ENCODE measurements at regions of chr7 and their contacts with region 1.

Region 1: DNA sequence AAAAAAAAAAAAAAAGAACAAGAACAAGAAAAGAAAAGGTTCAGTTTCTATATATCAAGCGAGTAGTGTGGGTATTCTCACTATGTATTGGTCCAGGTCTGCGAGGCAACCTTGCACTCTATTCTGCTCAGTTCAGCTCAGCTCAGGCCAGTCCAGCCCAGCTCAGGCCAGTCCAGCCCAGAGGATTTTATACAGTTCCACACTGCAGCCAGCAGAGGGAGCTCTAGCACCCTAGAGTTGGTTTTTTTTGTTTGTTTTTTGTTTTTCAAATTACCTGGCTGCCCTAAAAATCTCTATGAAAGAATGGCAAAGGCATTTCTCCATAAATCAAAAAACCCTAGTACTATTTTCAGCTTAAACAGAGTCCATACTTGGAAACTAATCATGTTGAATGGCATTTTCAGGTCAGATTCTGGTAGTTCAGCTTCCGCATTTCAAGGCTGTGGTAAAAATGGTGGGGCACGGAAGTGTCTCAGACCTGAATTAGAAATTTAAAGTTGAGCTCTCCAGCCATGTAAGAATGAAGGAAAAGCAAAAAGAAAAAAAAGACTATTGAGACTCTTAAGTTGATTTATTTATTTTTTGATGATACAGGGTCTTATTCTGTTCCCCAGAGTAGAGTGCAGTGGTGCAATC is 55.2 kb upstream of the GSDME start:
- DNase-seq: peak; percentile 52
- ATAC-seq: peak; percentile 75
- H3K4me3 Mint-ChIP-seq: no peak overlapping the region
- H3K27ac Mint-ChIP-seq: no peak overlapping the region
- H3K4me1 Mint-ChIP-seq: no peaks in the 10 kb centered on the region
- H3K27me3 Mint-ChIP-seq: no peaks in the 10 kb centered on the region
- CTCF ChIP-seq: peak; percentile 99

Region 2: GRCh38 chr7:24825931-24826661 is 13.7 kb after region 1 on chr7:
- CTCF ChIA-PET with region 1: interaction called, 20 read pairs
- POLR2A ChIA-PET with region 1: no interaction called
- intact Hi-C with region 1: no loop called
- DNase-seq: peak; percentile 13
- ATAC-seq: peak; percentile 17
- H3K4me3 Mint-ChIP-seq: no peak overlapping the region
- H3K27ac Mint-ChIP-seq: peak overlapping the region; percentile 68
- H3K4me1 Mint-ChIP-seq: peaks cover 64% of the 10 kb centered on the region
- H3K27me3 Mint-ChIP-seq: no peaks in the 10 kb centered on the region
- CTCF ChIP-seq: no peak

Region 3: DNA sequence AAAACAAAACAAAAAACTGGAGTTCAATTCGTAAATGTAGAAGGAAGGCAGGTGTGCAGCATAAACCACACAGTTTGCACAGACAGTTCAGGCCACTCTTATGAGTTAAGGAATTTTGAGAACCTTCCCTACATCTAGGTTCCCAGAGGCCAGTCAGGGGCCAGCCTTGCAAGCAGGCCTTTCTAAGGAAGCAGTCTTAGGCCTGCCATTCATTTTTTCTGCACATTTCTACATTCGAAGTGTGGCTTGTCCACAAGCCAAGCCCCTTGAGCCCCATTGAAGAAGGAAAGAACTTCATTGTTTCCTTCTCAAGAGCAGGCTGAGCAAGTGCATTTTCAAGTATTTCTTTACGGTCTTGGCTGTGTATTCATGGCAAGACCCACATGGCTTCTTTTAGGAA is 178.9 kb after region 1 on chr7:
- CTCF ChIA-PET with region 1: interaction called, 10 read pairs
- POLR2A ChIA-PET with region 1: no interaction called
- intact Hi-C with region 1: no loop called
- DNase-seq: no peak
- ATAC-seq: no peak
- H3K4me3 Mint-ChIP-seq: no peak overlapping the region
- H3K27ac Mint-ChIP-seq: no peak overlapping the region
- H3K4me1 Mint-ChIP-seq: no peaks in the 10 kb centered on the region
- H3K27me3 Mint-ChIP-seq: no peaks in the 10 kb centered on the region
- CTCF ChIP-seq: no peak

Region 4: GRCh38 chr7:25069900-25070443 is 257.5 kb after region 1 on chr7:
- CTCF ChIA-PET with region 1: interaction called, 66 read pairs
- POLR2A ChIA-PET with region 1: no interaction called
- intact Hi-C with region 1: no loop called
- DNase-seq: peak; percentile 54
- ATAC-seq: peak; percentile 71
- H3K4me3 Mint-ChIP-seq: no peak overlapping the region
- H3K27ac Mint-ChIP-seq: no peak overlapping the region
- H3K4me1 Mint-ChIP-seq: peaks cover 9% of the 10 kb centered on the region
- H3K27me3 Mint-ChIP-seq: peaks cover 2% of the 10 kb centered on the region
- CTCF ChIP-seq: peak; percentile 96

Region 5: DNA sequence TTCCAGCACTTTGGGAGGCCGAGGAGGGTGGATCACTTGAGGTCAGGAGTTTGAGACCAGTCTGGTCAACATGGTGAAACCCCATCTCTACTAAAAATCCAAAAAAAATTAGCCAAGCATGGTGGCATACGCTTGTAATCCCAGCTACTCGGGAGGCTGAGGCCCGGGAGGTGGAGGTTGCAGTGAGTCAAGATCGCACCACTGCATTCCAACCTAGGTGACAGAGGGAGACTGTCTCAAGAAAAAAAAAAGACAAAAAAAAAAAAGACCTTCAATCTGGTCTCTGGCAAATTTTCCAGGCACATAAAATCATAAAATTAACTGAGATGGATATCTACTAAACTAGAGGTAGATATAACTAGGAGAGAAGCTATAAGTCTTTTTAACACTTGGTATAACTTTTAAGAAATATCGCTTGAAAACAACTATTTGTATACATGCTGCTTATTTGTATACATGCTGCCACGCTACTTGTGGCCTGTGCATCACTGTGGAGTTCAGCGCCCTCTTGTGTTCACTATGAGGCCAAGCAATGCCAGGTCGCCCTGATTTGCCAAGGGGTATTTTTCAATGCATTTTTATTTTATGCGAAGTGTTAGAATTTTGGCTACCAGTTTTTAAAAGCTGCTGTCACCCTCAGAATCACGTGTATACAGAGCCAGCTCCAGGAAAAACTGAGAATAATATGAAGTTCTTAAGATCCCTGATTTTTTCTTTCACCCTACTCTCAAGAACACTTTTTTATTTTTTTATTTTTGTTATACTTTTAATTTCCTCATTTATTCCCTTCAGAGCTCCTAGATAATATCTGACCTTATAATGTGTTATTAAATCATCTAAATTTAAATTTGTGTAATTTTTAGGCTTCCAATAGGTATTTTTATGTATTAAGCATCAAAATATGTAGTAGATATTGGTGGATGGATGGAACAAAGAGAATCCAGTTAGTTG is 285.9 kb after region 1 on chr7:
- CTCF ChIA-PET with region 1: interaction called, 148 read pairs
- POLR2A ChIA-PET with region 1: interaction called, 3 read pairs
- intact Hi-C with region 1: no loop called
- DNase-seq: peak; percentile 74
- ATAC-seq: peak; percentile 80
- H3K4me3 Mint-ChIP-seq: no peak overlapping the region
- H3K27ac Mint-ChIP-seq: no peak overlapping the region
- H3K4me1 Mint-ChIP-seq: peaks cover 11% of the 10 kb centered on the region
- H3K27me3 Mint-ChIP-seq: peaks cover 2% of the 10 kb centered on the region
- CTCF ChIP-seq: peak; percentile 96

Measured in activated CD8-positive, alpha-beta T cell treated with anti-CD3 and anti-CD28 coated beads for 36 hours (primary cell).